ENCODE measurements at regions of chr2 and their contacts with region 1.

Region 1: GRCh38 chr2:27133905-27134780 is at the start of gene PREB:
- DNase-seq: peak; percentile 98
- H3K4me3 Mint-ChIP-seq: peak within 1 kb of the TSS; percentile 89
- H3K27ac Mint-ChIP-seq: peak within 1 kb of the TSS; percentile 86
- H3K4me1 Mint-ChIP-seq: peaks cover 20% of the 10 kb centered on the region
- H3K27me3 Mint-ChIP-seq: no peaks in the 10 kb centered on the region
- total RNA-seq, gene PREB: 64.7 to 65.4 TPM

Region 2: GRCh38 chr2:27071277-27071989 is 62.7 kb before region 1 on chr2 and contains the start of gene OST4:
- CTCF ChIA-PET with region 1: no interaction called
- POLR2A ChIA-PET with region 1: no interaction called
- intact Hi-C with region 1: loop called (anchors 2 kb)
- DNase-seq: peak; percentile 94
- H3K4me3 Mint-ChIP-seq: peak within 1 kb of the TSS; percentile 94
- H3K27ac Mint-ChIP-seq: peak within 1 kb of the TSS; percentile 93
- H3K4me1 Mint-ChIP-seq: peaks cover 71% of the 10 kb centered on the region
- H3K27me3 Mint-ChIP-seq: no peaks in the 10 kb centered on the region
- total RNA-seq, gene OST4: 307 to 310 TPM

Region 3: DNA sequence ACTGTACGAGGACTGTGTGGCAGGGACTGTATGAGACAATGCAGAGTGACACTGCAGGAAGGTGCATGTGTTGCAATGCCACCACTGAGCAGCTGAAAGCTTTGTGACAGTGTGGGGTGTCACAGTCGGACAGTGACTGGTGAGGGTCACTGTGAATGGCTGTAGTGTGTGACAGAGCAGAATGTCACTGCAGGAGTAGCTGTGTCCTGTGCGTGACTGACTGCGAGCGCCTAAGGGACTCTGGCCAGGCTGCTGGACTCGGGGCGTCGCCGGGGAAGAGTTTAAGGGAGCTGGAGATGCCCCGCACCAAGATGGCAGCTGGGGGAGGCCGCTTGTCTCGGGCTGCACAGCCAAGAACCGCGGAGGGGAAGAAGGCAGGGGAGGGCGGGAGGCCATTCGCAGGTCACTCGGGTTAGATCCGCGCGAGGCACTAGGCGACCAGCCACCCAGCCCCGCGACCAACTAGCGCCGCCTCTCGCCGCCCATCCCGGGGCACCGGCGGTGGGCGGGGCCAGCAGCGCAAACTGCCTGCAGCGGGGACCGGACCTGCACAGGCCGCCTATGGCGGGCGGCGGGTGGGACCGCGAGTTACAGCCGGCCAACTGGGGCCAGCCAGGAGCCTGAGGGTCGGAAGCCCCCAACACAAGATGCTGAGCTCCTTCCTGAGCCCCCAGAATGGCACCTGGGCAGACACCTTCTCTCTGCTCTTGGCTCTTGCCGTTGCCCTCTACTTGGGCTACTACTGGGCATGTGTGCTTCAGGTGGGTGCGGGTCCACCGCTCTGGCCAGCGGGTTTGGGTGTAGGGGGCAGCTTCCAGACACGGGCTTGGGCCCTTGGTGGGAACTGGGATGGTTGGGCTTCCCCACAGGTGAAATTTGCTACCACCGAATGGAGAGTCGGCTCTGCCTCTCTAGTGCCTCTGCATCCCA is 10.6 kb before region 1 on chr2 and contains the start of gene ABHD1:
- CTCF ChIA-PET with region 1: interaction called, 19 read pairs
- POLR2A ChIA-PET with region 1: interaction called, 20 read pairs
- intact Hi-C with region 1: loop called (anchors 1 kb)
- DNase-seq: peak; percentile 71
- H3K4me3 Mint-ChIP-seq: peak within 1 kb of the TSS; percentile 80
- H3K27ac Mint-ChIP-seq: no peak within 1 kb of the TSS
- H3K4me1 Mint-ChIP-seq: peaks cover 15% of the 10 kb centered on the region
- H3K27me3 Mint-ChIP-seq: peaks cover 17% of the 10 kb centered on the region
- total RNA-seq, gene ABHD1: 0.29 to 0.76 TPM

Region 4: GRCh38 chr2:27174316-27175040 is 40.3 kb after region 1 on chr2:
- CTCF ChIA-PET with region 1: interaction called, 14 read pairs
- POLR2A ChIA-PET with region 1: no interaction called
- intact Hi-C with region 1: no loop called
- DNase-seq: no peak
- H3K4me3 Mint-ChIP-seq: no peak overlapping the region
- H3K27ac Mint-ChIP-seq: no peak overlapping the region
- H3K4me1 Mint-ChIP-seq: peaks cover 2% of the 10 kb centered on the region
- H3K27me3 Mint-ChIP-seq: peaks cover 7% of the 10 kb centered on the region

Region 5: GRCh38 chr2:27217217-27218121 is 83.3 kb after region 1 on chr2 and contains the start of gene CAD:
- CTCF ChIA-PET with region 1: no interaction called
- POLR2A ChIA-PET with region 1: interaction called, 3 read pairs
- intact Hi-C with region 1: loop called (anchors 1 kb)
- DNase-seq: peak; percentile 91
- H3K4me3 Mint-ChIP-seq: peak within 1 kb of the TSS; percentile 93
- H3K27ac Mint-ChIP-seq: peak within 1 kb of the TSS; percentile 89
- H3K4me1 Mint-ChIP-seq: peaks cover 47% of the 10 kb centered on the region
- H3K27me3 Mint-ChIP-seq: no peaks in the 10 kb centered on the region
- total RNA-seq, gene CAD: 99.7 to 102 TPM

Measured in activated CD4-positive, alpha-beta memory T cell treated with anti-CD3 and anti-CD28 coated beads for 36 hours (primary cell).